Left cardiac atrium (tissue), 4 donors: ENCODE measurements at regions of chr10 and their contacts with region 1.

Region 1: DNA sequence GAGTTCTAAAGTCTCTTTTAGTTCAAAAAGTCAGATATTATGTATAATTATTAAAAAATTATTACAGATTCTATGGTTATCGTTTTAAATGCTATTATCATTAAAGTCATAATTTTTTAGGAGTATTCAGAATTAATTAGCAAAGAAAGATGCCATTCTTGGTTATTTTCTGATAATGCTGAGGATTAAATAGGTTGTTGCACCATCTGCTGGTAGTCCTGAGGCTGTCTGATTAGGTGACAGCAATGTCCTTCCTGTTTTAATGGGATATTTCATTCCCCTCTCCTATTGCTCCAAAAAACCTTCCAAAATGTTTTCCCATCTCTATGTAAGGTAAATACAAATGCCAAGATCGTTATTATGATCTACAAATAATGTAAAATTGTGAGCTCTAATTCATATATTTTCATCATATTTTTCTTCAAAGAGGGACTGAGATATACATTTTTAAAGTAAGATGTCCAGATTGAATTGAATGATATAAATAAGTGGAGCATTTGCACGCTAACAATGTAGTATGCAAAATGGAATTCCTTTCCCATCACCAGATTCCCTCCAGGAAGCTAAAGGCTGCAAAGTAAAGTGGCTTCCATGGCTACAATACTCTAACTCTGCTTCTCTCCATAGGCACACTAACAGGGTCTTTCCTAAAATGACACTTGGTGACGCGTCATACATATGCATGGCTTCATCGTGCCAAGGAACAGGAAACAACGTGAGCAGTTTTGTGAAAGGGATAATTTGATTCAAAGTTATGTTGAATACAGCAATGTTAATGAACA is 58.8 kb upstream of the AKR1E2 start:
- DNase-seq: no peak
- ATAC-seq: peak; percentile 57 to 62

Region 2: DNA sequence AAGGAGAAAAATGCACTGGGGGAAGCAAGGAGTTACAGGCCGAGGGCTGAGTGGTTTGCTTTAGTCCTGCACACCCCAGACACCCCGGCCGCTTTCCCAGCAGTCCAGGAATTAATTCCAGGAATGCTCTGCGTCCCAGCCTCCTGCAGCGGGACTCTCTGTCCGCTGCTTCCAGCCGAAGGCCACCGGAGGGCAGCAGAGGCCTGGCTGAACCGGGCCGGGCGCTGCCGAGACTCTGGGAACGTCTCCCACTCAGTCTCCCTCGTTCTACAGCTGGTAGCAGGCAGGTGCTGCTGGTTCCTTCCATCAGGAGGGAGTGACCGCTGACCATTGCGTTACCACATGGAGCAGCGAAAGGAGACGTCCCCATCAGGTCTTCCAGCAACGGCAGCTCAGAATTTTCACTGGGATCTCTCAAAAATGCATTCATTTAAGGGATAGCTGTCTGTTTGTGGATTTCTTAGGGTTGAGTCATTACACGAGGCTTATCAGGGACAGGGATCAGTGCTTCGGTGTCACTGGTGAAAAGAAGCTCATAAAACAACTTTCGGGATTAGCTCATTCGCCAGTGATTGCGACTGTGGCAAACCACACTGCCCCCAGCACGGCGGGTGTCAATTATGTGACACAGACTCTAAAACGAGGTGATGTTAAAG is 1569.7 kb before region 1 on chr10:
- intact Hi-C with region 1: loop called (anchors 2 to 5 kb)
- DNase-seq: peak; percentile 79
- ATAC-seq: peak; percentile 94 to 96

Region 3: GRCh38 chr10:4512671-4513240 is 254.5 kb before region 1 on chr10:
- intact Hi-C with region 1: loop called in 1 of 2 experiments (anchors 2 kb)
- DNase-seq: peak; percentile 62
- ATAC-seq: peak; percentile 78 to 79

Region 4: GRCh38 chr10:4663162-4663904 is 103.9 kb before region 1 on chr10:
- intact Hi-C with region 1: loop called (anchors 2 to 10 kb)
- DNase-seq: peak; percentile 59
- ATAC-seq: peak; percentile 89 to 98

Region 5: DNA sequence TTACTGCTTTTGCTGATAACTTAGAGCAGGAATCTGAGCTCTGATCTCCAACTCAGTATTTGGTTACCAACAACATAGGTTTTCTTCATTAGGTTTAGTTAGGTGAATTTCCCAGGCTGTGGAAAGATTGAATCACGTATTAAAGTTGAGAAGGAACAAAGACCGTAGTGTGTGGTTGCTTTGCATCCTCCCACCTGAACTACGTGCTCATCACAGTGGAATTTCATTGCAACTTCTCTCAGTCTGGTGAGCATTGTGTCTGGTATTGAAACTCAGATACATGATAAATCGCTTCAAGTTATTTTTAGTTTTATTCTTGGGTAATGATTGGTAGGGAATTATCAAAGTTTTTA is 80.6 kb before region 1 on chr10:
- intact Hi-C with region 1: loop called in 1 of 2 experiments (anchors 10 kb)
- DNase-seq: no peak
- ATAC-seq: peak in 1 of 2 donors; percentile 83

Region 6: DNA sequence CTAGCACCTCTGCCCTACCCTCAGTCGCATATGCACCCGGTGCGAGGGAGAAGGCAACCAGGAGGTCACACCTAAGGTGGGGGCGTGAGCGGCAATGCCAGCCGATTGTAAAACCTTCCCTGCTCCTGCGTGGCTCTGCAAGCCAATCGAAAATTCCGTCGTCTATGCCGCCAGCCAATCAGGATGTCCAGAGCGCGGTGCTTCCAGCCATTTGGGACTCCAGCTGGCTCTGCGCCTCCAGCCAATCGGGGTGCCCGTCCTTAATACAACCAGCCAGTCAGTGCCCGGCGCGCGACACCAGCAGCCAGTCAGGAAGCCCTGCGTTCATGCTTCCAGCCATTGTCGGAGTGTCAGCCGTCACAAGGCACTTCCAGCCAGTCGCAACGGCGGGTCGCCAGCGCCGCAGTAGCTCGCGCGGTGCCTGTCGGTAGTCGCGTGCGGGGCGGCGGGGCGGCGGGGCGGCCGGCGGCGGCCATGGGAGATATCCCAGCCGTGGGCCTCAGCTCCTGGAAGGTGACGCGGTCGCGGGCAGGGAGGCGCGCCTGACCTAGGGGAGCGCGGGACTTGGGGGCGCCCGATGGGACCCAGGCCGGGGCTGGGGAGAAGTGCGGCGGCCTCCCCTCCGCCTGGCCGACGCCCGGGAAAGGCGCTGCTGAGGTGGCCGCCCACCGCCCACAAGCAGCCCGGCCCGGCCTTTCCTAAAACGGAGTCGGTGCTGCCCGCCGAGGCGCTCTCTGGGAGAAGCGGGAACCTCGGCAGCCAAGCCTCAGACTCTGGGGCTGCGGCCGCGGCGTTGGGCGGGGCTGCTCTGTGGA is 58.8 kb after region 1 on chr10 and contains the start of gene AKR1E2:
- intact Hi-C with region 1: no loop called
- DNase-seq: peak; percentile 92
- ATAC-seq: peak; percentile 95 to 97
- total RNA-seq, gene AKR1E2: 7.5 to 8.4 TPM